ENCODE measurements at regions of chr3 and their contacts with region 1.

Region 1: GRCh38 chr3:62558549-62559112 is 185.3 kb upstream of the FEZF2 start:
- DNase-seq: peak in 1 of 9 experiments; percentile 2
- ATAC-seq: no peak
- H3K4me3 ChIP-seq: no peak overlapping the region
- H3K4me3 Mint-ChIP-seq: no peak overlapping the region
- H3K27ac ChIP-seq: no peak overlapping the region
- H3K27ac Mint-ChIP-seq: no peak overlapping the region
- H3K4me1 ChIP-seq: no peaks in the 10 kb centered on the region
- H3K4me1 Mint-ChIP-seq: no peaks in the 10 kb centered on the region
- H3K27me3 ChIP-seq: no peaks in the 10 kb centered on the region
- H3K27me3 Mint-ChIP-seq: no peaks in the 10 kb centered on the region
- CTCF ChIP-seq: no peak

Region 2: DNA sequence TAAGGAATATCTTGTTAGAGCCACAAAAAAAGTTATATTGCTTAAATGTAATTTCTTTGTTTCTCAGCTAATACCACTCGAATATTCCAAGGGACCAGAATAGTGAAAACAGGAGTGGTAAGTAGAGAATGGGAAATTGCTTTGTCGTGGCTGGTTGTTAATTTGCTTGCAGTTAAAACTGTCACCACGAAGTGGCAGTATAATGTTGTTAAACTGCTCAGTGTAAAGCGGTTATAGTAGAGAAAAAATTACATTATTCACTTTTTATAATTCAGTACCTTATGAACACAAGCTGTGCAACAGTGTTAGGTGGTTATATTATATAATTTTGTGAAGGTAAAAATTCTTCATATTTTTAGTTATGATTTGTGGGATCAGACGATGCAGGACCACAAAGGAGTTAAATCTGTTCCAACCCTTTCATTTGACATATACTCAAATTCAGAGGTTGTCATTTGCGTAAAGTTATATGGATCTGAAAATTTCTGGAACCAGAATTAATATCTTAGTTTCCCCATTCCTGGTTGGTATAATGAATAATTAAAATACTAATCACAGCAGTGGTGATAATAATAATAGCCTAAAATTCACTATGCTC is 357.1 kb before region 1 on chr3:
- CTCF ChIA-PET with region 1: no interaction called
- POLR2A ChIA-PET with region 1: no interaction called
- intact Hi-C with region 1: loop called (anchors 5 kb)
- DNase-seq: peak in 2 of 9 experiments; percentile 7 to 14
- ATAC-seq: no peak
- H3K4me3 ChIP-seq: no peak overlapping the region
- H3K4me3 Mint-ChIP-seq: no peak overlapping the region
- H3K27ac ChIP-seq: no peak overlapping the region
- H3K27ac Mint-ChIP-seq: no peak overlapping the region
- H3K4me1 ChIP-seq: no peaks in the 10 kb centered on the region
- H3K4me1 Mint-ChIP-seq: no peaks in the 10 kb centered on the region
- H3K27me3 ChIP-seq: no peaks in the 10 kb centered on the region
- H3K27me3 Mint-ChIP-seq: peaks cover 2% of the 10 kb centered on the region
- CTCF ChIP-seq: peak; percentile 47

Region 3: GRCh38 chr3:62332835-62333244 is 225.8 kb before region 1 on chr3:
- CTCF ChIA-PET with region 1: no interaction called
- POLR2A ChIA-PET with region 1: no interaction called
- intact Hi-C with region 1: loop called (anchors 2 kb)
- DNase-seq: peak in 2 of 9 experiments; percentile 4 to 9
- ATAC-seq: no peak
- H3K4me3 ChIP-seq: no peak overlapping the region
- H3K4me3 Mint-ChIP-seq: no peak overlapping the region
- H3K27ac ChIP-seq: no peak overlapping the region
- H3K27ac Mint-ChIP-seq: no peak overlapping the region
- H3K4me1 ChIP-seq: no peaks in the 10 kb centered on the region
- H3K4me1 Mint-ChIP-seq: no peaks in the 10 kb centered on the region
- H3K27me3 ChIP-seq: no peaks in the 10 kb centered on the region
- H3K27me3 Mint-ChIP-seq: peaks cover 6% of the 10 kb centered on the region
- CTCF ChIP-seq: peak; percentile 61

Measured in CD8-positive, alpha-beta T cell (primary cell).